Cardiac septum (tissue), 1 donor: ENCODE measurements at regions of chr4 and their contacts with region 1.

Region 1: GRCh38 chr4:54784161-54784671 is 126.5 kb downstream of the KIT start:
- DNase-seq: peak; percentile 92

Region 2: GRCh38 chr4:54929459-54929858 is 145.2 kb after region 1 on chr4:
- intact Hi-C with region 1: loop called (anchors 5 kb)
- DNase-seq: no peak